ENCODE measurements at regions of chr11 and their contacts with region 1.

Region 1: GRCh38 chr11:63838678-63839507 is at the start of gene MARK2:
- DNase-seq: peak; percentile 96 to 100
- ATAC-seq: peak; percentile 78
- total RNA-seq, gene MARK2: 91.8 to 100 TPM

Region 2: GRCh38 chr11:63906585-63906984 is 67.7 kb after region 1 on chr11:
- intact Hi-C with region 1: no loop called
- DNase-seq: peak in 1 of 2 donors; percentile 53
- ATAC-seq: no peak

Region 3: GRCh38 chr11:63945477-63946163 is 106.7 kb after region 1 on chr11:
- intact Hi-C with region 1: loop called (anchors 2 to 5 kb)
- DNase-seq: peak; percentile 65 to 69
- ATAC-seq: peak; percentile 85

Region 4: GRCh38 chr11:64028398-64029115 is 189.7 kb after region 1 on chr11:
- intact Hi-C with region 1: no loop called
- DNase-seq: no peak
- ATAC-seq: peak; percentile 24

Region 5: GRCh38 chr11:64152841-64153691 is 314.2 kb after region 1 on chr11:
- intact Hi-C with region 1: loop called in 1 of 2 experiments (anchors 10 kb)
- DNase-seq: peak; percentile 42 to 73
- ATAC-seq: peak; percentile 89